Prostate gland (tissue), 2 donors: ENCODE measurements at regions of chr3 and their contacts with region 1.

Region 1: GRCh38 chr3:42443819-42444436 is 33.5 kb upstream of the LYZL4 start:
- DNase-seq: peak; percentile 84
- H3K4me3 ChIP-seq: no peak overlapping the region
- H3K27ac ChIP-seq: no peak overlapping the region
- H3K4me1 ChIP-seq: no peaks in the 10 kb centered on the region
- H3K27me3 ChIP-seq: no peaks in the 10 kb centered on the region
- CTCF ChIP-seq: peak; percentile 88 to 97 (median 96)
- POLR2A ChIP-seq: no peak

Region 2: GRCh38 chr3:42122651-42123581 is 321.0 kb before region 1 on chr3:
- intact Hi-C with region 1: loop called (anchors 10 kb)
- DNase-seq: peak; percentile 69
- H3K4me3 ChIP-seq: no peak overlapping the region
- H3K27ac ChIP-seq: peak overlapping the region; percentile 59 to 60
- H3K4me1 ChIP-seq: peaks cover 12% of the 10 kb centered on the region
- H3K27me3 ChIP-seq: no peaks in the 10 kb centered on the region
- CTCF ChIP-seq: no peak
- POLR2A ChIP-seq: no peak

Region 3: GRCh38 chr3:42229942-42230688 is 213.8 kb before region 1 on chr3:
- intact Hi-C with region 1: loop called (anchors 2 kb)
- DNase-seq: peak; percentile 35
- H3K4me3 ChIP-seq: no peak overlapping the region
- H3K27ac ChIP-seq: peak overlapping the region; percentile 45 to 73
- H3K4me1 ChIP-seq: peaks cover 8% of the 10 kb centered on the region
- H3K27me3 ChIP-seq: no peaks in the 10 kb centered on the region
- CTCF ChIP-seq: peak; percentile 33 to 84 (median 64)
- POLR2A ChIP-seq: no peak

Region 4: DNA sequence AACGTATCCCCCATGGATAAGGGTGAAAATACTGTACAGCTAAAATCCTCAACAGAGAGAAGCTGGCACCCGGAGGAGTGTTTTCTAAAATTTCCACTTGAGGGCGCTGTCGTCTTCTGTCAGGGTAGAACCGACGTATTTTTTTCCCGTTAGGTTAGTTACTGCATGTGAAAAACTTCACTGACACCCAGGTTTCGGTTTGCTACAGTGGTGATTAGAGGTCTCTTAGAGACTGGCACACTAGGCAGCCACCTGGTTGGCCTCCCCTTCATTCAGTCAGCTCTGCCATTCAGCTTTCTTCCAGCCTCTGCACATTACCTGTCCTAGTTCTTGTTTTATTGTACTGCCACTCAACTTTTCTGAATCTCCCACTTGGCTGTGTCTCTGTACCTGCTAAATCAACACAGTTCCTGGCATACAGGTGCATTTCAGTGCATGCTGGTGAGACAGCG is 196.3 kb before region 1 on chr3:
- intact Hi-C with region 1: loop called (anchors 5 kb)
- DNase-seq: peak; percentile 73
- H3K4me3 ChIP-seq: peak overlapping the region; percentile 9 to 22
- H3K27ac ChIP-seq: peak overlapping the region; percentile 50 to 54
- H3K4me1 ChIP-seq: no peaks in the 10 kb centered on the region
- H3K27me3 ChIP-seq: no peaks in the 10 kb centered on the region
- CTCF ChIP-seq: peak; percentile 59 to 91 (median 80)
- POLR2A ChIP-seq: no peak

Region 5: DNA sequence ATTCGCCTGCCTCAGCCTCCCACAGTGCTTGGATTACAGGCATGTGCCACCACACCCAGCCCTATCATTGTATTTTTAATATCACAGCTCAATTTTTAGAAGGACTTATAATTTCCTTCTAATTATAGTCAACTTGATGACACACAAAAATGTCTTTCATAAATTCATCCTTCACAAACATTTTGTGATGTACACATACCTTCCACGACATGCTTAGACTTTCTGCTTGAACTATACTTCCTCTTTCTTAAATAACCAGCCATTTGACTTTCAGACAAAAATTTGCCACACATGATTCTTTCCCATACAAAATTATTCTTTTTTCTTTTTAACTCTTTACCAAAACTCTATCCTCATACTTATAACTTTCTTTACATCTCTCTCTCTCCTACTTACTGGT is 129.5 kb before region 1 on chr3:
- intact Hi-C with region 1: no loop called
- DNase-seq: no peak
- H3K4me3 ChIP-seq: no peak overlapping the region
- H3K27ac ChIP-seq: no peak overlapping the region
- H3K4me1 ChIP-seq: no peaks in the 10 kb centered on the region
- H3K27me3 ChIP-seq: no peaks in the 10 kb centered on the region
- CTCF ChIP-seq: no peak
- POLR2A ChIP-seq: no peak